ENCODE measurements at regions of chr7 and their contacts with region 1.

Region 1: DNA sequence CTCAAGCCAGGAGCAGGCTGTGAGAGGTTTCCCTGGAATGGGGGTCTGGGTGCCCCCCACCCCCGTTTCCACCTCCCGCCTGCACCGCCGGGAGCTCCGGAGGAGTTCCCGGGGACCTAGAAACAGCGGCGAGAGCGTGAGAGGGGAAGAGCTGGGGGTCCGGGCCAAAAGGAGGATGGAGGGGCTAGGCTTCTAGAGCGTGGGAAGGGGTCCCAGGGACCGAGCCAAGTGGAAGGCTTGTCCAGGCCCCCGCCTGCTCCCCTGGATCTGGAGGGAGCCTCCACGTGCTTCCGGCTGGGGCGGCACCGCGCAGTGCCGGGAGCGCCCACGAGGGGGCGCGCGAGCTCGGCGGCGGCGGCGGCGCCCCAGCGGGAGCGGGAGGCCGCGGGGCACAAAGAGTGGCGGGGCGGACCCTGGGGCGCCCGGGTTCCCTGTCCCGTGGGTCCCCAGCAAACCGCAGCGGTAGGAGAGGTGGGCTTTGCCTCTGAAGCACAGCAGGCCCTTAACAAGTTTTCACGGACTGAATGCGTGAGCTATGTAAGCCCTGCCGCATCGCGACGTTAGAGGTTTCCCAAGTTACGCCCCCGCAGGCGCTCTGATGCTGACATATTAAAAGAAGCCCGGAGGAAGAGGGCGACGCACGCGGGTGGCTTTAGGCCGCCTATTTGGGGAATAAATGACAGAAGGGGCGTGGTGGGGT is 104.4 kb upstream of the LRRC4 start:
- DNase-seq: peak; percentile 78
- H3K4me3 Mint-ChIP-seq: peak overlapping the region; percentile 61
- H3K27ac Mint-ChIP-seq: no peak overlapping the region
- H3K4me1 Mint-ChIP-seq: peaks cover 12% of the 10 kb centered on the region
- H3K27me3 Mint-ChIP-seq: peaks cover 18% of the 10 kb centered on the region

Region 2: DNA sequence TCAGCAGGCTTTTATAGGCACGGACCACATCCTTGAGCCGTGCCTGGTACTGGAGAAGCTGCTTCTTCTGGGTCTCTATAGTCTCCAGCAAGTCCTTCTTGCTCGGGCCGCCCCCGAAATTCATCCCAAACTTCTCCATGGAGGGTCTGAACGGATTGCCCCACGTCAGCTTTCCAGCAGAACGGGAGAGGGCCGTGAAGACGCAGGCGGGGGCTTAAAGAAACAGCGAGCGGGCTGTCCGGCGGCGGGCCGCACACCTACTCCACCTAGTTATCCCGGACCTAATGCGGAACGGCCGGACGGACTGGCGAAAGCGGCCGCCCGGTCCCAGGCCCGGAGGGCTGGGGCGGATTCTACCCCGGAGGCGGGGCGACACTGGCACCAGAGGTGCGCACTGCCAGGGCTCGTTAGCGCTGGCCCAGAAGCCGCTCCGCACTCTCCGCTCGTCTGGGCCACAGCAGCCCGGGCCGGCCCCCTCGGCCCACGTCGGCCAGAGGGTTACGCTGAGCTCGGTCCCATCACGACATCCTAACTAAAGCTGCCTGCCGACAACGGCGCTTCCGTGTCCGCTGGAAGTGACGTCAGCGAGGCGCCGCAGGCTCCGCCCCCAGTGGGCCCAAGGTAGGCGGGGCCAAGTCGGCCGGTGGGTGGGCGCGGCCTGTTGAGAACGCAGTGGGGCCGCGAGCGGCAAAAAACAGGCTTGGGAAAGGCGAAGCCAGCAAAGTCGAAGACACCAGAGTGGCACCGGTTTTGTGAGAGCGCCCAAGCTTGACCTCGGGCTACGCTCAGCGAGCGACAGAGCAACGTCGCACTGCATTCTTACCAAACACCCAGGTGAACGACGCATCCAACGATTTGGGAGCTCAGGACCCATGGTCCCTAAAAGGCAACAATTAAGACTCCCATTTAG is 550.4 kb before region 1 on chr7 and contains the start of gene GCC1:
- CTCF ChIA-PET with region 1: no interaction called
- intact Hi-C with region 1: loop called (anchors 5 kb)
- DNase-seq: peak; percentile 94
- H3K4me3 Mint-ChIP-seq: peak within 1 kb of the TSS; percentile 89
- H3K27ac Mint-ChIP-seq: peak within 1 kb of the TSS; percentile 70
- H3K4me1 Mint-ChIP-seq: peaks cover 66% of the 10 kb centered on the region
- H3K27me3 Mint-ChIP-seq: no peaks in the 10 kb centered on the region
- total RNA-seq, gene GCC1: 11.0 to 12.0 TPM

Region 3: GRCh38 chr7:127708788-127709187 is 426.9 kb before region 1 on chr7:
- CTCF ChIA-PET with region 1: interaction called, 11 read pairs
- intact Hi-C with region 1: loop called (anchors 1 kb)
- DNase-seq: peak; percentile 89
- H3K4me3 Mint-ChIP-seq: no peak overlapping the region
- H3K27ac Mint-ChIP-seq: no peak overlapping the region
- H3K4me1 Mint-ChIP-seq: peaks cover 9% of the 10 kb centered on the region
- H3K27me3 Mint-ChIP-seq: no peaks in the 10 kb centered on the region

Region 4: DNA sequence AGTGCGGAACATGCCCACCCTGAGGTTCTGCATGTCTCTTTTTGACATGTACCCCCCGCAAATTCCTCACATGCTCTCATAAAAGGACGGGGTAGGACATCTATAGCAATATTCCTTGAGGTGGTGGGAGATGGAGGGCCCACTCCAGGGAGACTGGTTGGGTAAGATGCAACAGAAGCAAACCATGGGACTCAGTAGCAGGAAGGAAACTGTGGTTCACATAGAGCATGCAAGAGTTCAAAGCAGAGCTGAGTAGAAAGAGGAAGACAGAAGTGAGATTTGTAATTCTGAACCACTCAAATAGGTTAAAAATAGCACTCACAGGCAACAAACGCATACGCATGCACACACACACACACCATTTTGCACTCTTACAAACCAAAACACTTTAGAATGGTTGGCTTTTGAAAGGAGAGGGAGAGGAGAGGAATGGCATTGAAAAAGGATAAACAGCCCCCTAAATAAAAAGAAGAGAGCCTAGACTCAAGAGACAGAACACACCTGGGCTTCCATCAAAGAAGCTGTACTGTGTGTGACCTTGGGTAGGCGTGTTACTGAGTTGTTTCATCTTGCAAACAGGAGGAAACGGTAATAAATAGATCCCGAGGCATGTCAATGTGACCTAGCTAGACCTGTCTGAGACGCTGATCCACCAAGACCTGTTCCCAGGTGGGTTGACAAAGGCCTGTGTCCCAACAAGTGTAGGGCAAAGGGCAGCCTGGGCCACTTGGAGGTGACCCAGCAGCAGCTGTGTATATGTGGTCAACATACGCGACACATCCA is 26.8 kb before region 1 on chr7:
- CTCF ChIA-PET with region 1: interaction called, 26 read pairs
- intact Hi-C with region 1: no loop called
- DNase-seq: peak; percentile 45
- H3K4me3 Mint-ChIP-seq: no peak overlapping the region
- H3K27ac Mint-ChIP-seq: peak overlapping the region; percentile 62
- H3K4me1 Mint-ChIP-seq: peaks cover 66% of the 10 kb centered on the region
- H3K27me3 Mint-ChIP-seq: peaks cover under 1% of the 10 kb centered on the region

Region 5: GRCh38 chr7:128121711-128122530 is 13.7 kb before region 1 on chr7:
- CTCF ChIA-PET with region 1: interaction called, 13 read pairs
- intact Hi-C with region 1: no loop called
- DNase-seq: peak; percentile 39
- H3K4me3 Mint-ChIP-seq: no peak overlapping the region
- H3K27ac Mint-ChIP-seq: no peak overlapping the region
- H3K4me1 Mint-ChIP-seq: peaks cover 12% of the 10 kb centered on the region
- H3K27me3 Mint-ChIP-seq: no peaks in the 10 kb centered on the region

Region 6: DNA sequence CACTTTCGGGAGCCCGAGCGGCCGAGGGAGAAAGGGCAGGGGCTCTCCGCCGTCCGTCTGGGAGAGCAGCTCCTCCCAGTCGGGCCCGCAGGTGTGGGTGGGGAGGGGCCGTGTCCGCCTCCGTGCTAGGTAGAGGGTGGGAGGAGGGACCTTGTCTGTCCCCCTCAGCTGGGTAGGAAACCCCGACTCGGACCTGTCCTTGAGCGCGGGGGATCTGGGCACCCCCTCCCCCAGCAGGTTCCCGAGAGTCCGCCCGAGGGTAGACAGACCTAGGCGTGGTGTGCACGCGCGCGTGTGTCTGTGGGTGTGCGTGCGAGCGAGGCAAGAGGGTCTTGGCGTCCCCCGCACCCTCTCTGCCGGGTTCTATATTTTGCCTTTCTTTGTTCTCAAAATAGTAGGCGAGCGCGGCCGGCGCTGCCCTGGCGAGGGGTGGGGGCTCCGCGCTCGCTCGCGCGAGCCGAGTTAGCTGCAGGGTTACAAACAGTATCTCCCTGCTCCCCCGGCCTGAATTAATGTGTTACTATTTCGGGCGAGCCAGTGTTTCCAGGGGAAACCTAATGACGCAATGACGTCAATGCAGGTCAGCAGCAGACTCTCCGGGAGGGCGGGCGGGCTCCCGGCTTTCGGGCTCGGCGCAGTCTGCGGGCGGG is 31.5 kb after region 1 on chr7:
- CTCF ChIA-PET with region 1: interaction called, 9 read pairs
- intact Hi-C with region 1: loop called (anchors 2 kb)
- DNase-seq: peak; percentile 46
- H3K4me3 Mint-ChIP-seq: peak overlapping the region; percentile 66
- H3K27ac Mint-ChIP-seq: no peak overlapping the region
- H3K4me1 Mint-ChIP-seq: peaks cover 8% of the 10 kb centered on the region
- H3K27me3 Mint-ChIP-seq: peaks cover 45% of the 10 kb centered on the region

Region 7: GRCh38 chr7:128235471-128235870 is 99.8 kb after region 1 on chr7:
- CTCF ChIA-PET with region 1: no interaction called
- intact Hi-C with region 1: no loop called
- DNase-seq: no peak
- H3K4me3 Mint-ChIP-seq: no peak overlapping the region
- H3K27ac Mint-ChIP-seq: no peak overlapping the region
- H3K4me1 Mint-ChIP-seq: peaks cover 7% of the 10 kb centered on the region
- H3K27me3 Mint-ChIP-seq: peaks cover 6% of the 10 kb centered on the region

Region 8: GRCh38 chr7:128409596-128410160 is 274.0 kb after region 1 on chr7 and contains the start of gene IMPDH1:
- CTCF ChIA-PET with region 1: no interaction called
- intact Hi-C with region 1: no loop called
- DNase-seq: peak; percentile 86
- H3K4me3 Mint-ChIP-seq: peak within 1 kb of the TSS; percentile 85
- H3K27ac Mint-ChIP-seq: peak within 1 kb of the TSS; percentile 47
- H3K4me1 Mint-ChIP-seq: peaks cover 20% of the 10 kb centered on the region
- H3K27me3 Mint-ChIP-seq: peaks cover 2% of the 10 kb centered on the region
- total RNA-seq, gene IMPDH1: 44.3 to 45.9 TPM

Measured in activated naive CD4-positive, alpha-beta T cell treated with anti-CD3 and anti-CD28 coated beads for 36 hours (primary cell).